ENCODE measurements at regions of chr1 and their contacts with region 1.

Region 1: DNA sequence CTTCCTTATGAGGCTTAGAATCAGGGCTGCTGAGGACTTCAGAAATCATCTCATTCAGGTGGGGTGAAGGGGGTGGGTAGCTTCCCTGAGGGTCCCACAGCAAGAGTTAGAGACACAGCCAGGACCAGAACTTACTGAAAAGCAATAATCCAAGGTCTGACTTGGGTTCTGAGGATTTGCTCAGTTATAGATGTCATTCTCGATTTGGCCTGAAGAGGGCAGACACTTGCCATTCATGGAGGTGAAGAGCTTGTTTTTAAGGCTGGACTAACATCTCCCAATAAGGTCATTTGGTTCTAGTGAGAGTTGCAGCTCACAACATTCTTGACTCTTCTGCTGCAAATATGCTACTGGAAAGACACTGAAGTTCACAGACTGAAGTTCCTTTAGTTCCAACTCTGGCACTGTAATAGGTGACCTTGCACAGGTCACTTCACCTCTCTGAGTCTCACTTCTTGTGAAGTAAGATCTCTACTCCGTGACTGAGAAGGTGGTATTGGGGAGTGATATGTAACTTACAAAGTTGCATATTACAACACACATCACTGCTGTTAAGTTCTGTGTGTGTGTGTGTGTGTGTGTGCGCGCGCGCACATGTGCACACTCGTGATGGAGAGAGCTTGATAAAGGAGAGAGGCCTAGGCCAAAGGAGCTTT is 69.8 kb upstream of the DIRAS3 start:
- DNase-seq: peak; percentile 52
- ATAC-seq: peak; percentile 51
- H3K4me3 Mint-ChIP-seq: no peak overlapping the region
- H3K27ac Mint-ChIP-seq: no peak overlapping the region
- H3K4me1 Mint-ChIP-seq: peaks cover 2% of the 10 kb centered on the region
- H3K27me3 Mint-ChIP-seq: no peaks in the 10 kb centered on the region
- CTCF ChIP-seq: peak; percentile 73

Region 2: DNA sequence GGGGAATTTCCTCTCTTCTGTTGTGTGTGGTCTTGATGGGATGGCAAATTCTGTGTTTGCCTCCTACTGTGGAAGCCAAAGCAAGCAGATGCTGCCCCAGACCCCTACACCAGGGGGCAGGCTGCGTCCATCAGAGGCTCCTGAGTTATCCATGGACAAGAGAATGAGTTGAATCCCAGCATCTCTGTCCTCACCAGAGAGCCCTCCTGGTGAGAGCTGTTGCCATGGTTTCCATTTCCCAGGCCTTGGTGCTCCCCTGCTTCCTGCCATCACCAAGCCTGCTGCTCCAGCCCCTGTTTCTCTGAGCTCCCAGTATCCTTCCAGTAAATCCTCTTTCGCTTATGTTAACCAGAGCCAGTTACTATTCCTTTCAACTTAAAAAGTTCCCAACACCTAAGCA is 266.6 kb before region 1 on chr1:
- CTCF ChIA-PET with region 1: interaction called, 11 read pairs
- POLR2A ChIA-PET with region 1: no interaction called
- intact Hi-C with region 1: no loop called
- DNase-seq: peak; percentile 49
- ATAC-seq: no peak
- H3K4me3 Mint-ChIP-seq: no peak overlapping the region
- H3K27ac Mint-ChIP-seq: no peak overlapping the region
- H3K4me1 Mint-ChIP-seq: no peaks in the 10 kb centered on the region
- H3K27me3 Mint-ChIP-seq: peaks cover 13% of the 10 kb centered on the region
- CTCF ChIP-seq: peak; percentile 23

Region 3: DNA sequence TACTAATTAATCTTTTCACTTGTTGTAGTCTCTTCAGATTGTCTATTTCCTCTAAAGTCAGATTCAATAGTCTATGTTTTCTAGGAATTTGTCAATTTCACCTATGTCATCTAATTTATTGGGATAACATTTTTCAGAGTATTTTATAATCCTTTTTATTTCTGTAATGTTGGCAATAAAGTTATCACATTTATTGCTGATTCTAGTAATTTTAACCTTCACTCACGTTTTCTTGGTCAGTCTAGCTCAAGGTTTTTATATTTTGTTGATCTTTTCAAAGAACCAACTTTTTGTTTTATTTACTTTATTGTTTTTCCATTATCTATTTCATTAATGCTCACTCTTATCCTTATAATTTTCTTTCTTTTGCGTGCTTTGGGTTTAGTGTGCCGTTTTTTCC is 189.1 kb before region 1 on chr1:
- CTCF ChIA-PET with region 1: no interaction called
- POLR2A ChIA-PET with region 1: no interaction called
- intact Hi-C with region 1: no loop called
- DNase-seq: no peak
- ATAC-seq: no peak
- H3K4me3 Mint-ChIP-seq: no peak overlapping the region
- H3K27ac Mint-ChIP-seq: no peak overlapping the region
- H3K4me1 Mint-ChIP-seq: no peaks in the 10 kb centered on the region
- H3K27me3 Mint-ChIP-seq: no peaks in the 10 kb centered on the region
- CTCF ChIP-seq: no peak

Region 4: DNA sequence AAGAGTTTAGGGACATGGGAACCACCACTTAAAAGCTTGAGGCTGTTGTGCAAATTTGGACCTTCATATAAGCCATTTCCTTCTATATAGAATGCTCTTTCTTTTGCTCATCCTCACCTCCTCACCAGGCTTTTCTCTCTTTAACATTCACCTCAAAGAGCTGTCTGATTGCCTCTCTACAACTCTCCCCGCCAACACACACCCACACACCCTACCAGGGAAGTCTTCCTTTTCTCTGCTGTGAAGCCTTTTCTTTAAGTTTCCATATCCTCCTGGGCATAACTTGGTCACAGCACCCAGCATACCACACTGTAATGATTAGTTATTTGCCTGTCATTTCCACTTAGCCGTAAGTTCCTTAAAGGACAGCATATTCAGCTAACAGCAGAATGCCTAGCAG is 71.5 kb after region 1 on chr1:
- CTCF ChIA-PET with region 1: no interaction called
- POLR2A ChIA-PET with region 1: no interaction called
- intact Hi-C with region 1: no loop called
- DNase-seq: no peak
- ATAC-seq: no peak
- H3K4me3 Mint-ChIP-seq: no peak overlapping the region
- H3K27ac Mint-ChIP-seq: no peak overlapping the region
- H3K4me1 Mint-ChIP-seq: no peaks in the 10 kb centered on the region
- H3K27me3 Mint-ChIP-seq: peaks cover 1% of the 10 kb centered on the region
- CTCF ChIP-seq: no peak

Region 5: DNA sequence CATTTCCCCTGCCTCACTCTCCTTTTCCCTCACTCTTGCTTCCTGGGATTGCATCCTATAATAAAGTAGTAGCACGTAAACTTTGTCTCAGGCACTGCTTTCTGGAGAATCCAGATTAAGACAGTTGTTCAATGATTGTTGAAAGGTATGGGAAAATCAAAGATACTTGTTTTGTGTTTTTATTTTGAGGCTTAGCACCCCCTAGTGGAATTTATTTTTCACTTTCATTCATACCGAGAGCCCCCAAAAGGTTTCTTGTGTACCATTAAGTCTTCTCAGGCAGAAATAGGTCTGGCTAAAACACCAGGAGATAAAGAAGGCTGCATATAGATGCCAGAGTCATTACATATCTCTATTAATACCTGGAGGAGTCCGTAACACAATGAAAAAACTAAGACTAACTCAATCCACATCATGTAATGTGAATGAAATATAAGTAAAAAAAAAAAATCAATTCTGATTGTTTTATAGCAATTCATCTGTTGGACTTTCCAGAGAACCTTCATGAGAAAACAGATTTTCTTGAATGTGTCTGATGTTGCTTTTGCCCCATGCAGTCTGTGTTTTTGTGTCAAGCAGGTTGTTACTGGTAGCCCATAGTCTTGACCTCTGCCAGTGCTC is 226.0 kb after region 1 on chr1:
- CTCF ChIA-PET with region 1: interaction called, 17 read pairs
- POLR2A ChIA-PET with region 1: no interaction called
- intact Hi-C with region 1: loop called (anchors 2 kb)
- DNase-seq: no peak
- ATAC-seq: no peak
- H3K4me3 Mint-ChIP-seq: no peak overlapping the region
- H3K27ac Mint-ChIP-seq: no peak overlapping the region
- H3K4me1 Mint-ChIP-seq: no peaks in the 10 kb centered on the region
- H3K27me3 Mint-ChIP-seq: no peaks in the 10 kb centered on the region
- CTCF ChIP-seq: peak; percentile 47

Region 6: DNA sequence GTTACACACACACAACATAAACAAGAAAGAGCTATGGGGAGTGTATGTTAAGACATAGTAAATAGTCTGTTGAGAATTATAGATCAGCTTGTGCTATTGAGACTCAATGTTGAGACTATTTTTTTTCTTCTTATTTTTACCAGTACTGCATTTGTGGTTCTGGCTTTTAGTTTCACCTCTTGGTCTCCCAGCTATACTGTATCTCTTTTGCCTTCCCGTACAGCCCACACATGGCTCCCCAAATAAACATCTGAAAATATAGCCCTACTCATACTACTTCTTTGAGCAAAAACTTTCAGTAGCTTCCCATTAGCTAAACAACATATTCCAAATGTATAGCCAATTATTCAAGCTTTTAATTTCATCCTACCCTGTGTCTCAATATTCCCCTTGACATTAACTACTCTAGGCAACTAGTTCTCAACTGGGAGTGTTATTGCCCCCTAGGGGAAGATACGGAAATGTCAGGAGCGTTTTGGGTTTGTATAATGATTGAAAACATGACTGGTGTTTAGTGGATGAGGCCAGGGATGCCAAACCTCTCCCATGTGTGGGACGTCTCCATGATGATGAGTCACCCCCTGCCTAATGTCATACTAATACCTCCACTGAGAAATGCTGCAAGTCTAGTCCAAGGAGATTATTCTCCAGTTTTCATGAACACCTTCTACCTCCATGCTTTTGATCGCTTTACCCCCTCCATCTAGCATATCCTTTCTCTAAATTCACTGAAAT is 322.7 kb after region 1 on chr1:
- CTCF ChIA-PET with region 1: interaction called, 13 read pairs
- POLR2A ChIA-PET with region 1: no interaction called
- intact Hi-C with region 1: loop called (anchors 5 kb)
- DNase-seq: peak; percentile 29
- ATAC-seq: peak; percentile 30
- H3K4me3 Mint-ChIP-seq: no peak overlapping the region
- H3K27ac Mint-ChIP-seq: no peak overlapping the region
- H3K4me1 Mint-ChIP-seq: no peaks in the 10 kb centered on the region
- H3K27me3 Mint-ChIP-seq: peaks cover under 1% of the 10 kb centered on the region
- CTCF ChIP-seq: peak; percentile 37

Region 7: GRCh38 chr1:69737527-69738185 is 1617.4 kb after region 1 on chr1:
- CTCF ChIA-PET with region 1: interaction called, 10 read pairs
- POLR2A ChIA-PET with region 1: no interaction called
- intact Hi-C with region 1: no loop called
- DNase-seq: peak; percentile 5
- ATAC-seq: no peak
- H3K4me3 Mint-ChIP-seq: no peak overlapping the region
- H3K27ac Mint-ChIP-seq: no peak overlapping the region
- H3K4me1 Mint-ChIP-seq: no peaks in the 10 kb centered on the region
- H3K27me3 Mint-ChIP-seq: no peaks in the 10 kb centered on the region
- CTCF ChIP-seq: peak; percentile 63